HCT116 (cell line): ENCODE measurements at regions of chr9 and their contacts with region 1.

Region 1: GRCh38 chr9:24516463-24516862 is 29.2 kb downstream of the IZUMO3 start:
- DNase-seq: no peak
- ATAC-seq: no peak
- H3K4me3 ChIP-seq: no peak overlapping the region
- H3K27ac ChIP-seq: no peak overlapping the region
- H3K4me1 ChIP-seq: no peaks in the 10 kb centered on the region
- H3K27me3 ChIP-seq: no peaks in the 10 kb centered on the region
- CTCF ChIP-seq: no peak
- POLR2A ChIP-seq: no peak
- RAD21 ChIP-seq: no peak

Region 2: GRCh38 chr9:24479361-24480059 is 37.0 kb before region 1 on chr9:
- CTCF ChIA-PET with region 1: no interaction called
- POLR2A ChIA-PET with region 1: no interaction called
- RAD21 ChIA-PET with region 1: no interaction called
- intact Hi-C with region 1: no loop called
- DNase-seq: no peak
- ATAC-seq: no peak
- H3K4me3 ChIP-seq: no peak overlapping the region
- H3K27ac ChIP-seq: no peak overlapping the region
- H3K4me1 ChIP-seq: no peaks in the 10 kb centered on the region
- H3K27me3 ChIP-seq: no peaks in the 10 kb centered on the region
- CTCF ChIP-seq: no peak
- POLR2A ChIP-seq: no peak
- RAD21 ChIP-seq: no peak

Region 3: GRCh38 chr9:24500761-24501160 is 15.7 kb before region 1 on chr9:
- CTCF ChIA-PET with region 1: no interaction called
- POLR2A ChIA-PET with region 1: no interaction called
- RAD21 ChIA-PET with region 1: no interaction called
- intact Hi-C with region 1: loop called (anchors 1 kb)
- DNase-seq: no peak
- ATAC-seq: no peak
- H3K4me3 ChIP-seq: no peak overlapping the region
- H3K27ac ChIP-seq: no peak overlapping the region
- H3K4me1 ChIP-seq: no peaks in the 10 kb centered on the region
- H3K27me3 ChIP-seq: no peaks in the 10 kb centered on the region
- CTCF ChIP-seq: no peak
- POLR2A ChIP-seq: no peak
- RAD21 ChIP-seq: no peak